ENCODE measurements at regions of chrX and their contacts with region 1.

Region 1: GRCh38 chrX:136268051-136269048 is 17.1 kb upstream of the MAP7D3 start:
- DNase-seq: peak; percentile 51
- H3K4me3 Mint-ChIP-seq: no peak overlapping the region
- H3K27ac Mint-ChIP-seq: no peak overlapping the region
- H3K4me1 Mint-ChIP-seq: peaks cover 7% of the 10 kb centered on the region
- H3K27me3 Mint-ChIP-seq: no peaks in the 10 kb centered on the region

Region 2: GRCh38 chrX:136162831-136163570 is 105.3 kb before region 1 on chrX:
- CTCF ChIA-PET with region 1: interaction called, 16 read pairs
- POLR2A ChIA-PET with region 1: no interaction called
- DNase-seq: peak; percentile 49
- H3K4me3 Mint-ChIP-seq: no peak overlapping the region
- H3K27ac Mint-ChIP-seq: no peak overlapping the region
- H3K4me1 Mint-ChIP-seq: peaks cover 8% of the 10 kb centered on the region
- H3K27me3 Mint-ChIP-seq: no peaks in the 10 kb centered on the region